MCF 10A (cell line): ENCODE measurements at regions of chr2 and their contacts with region 1.

Region 1: GRCh38 chr2:165305391-165306096 is 66.3 kb downstream of the SCN2A start:
- DNase-seq: no peak
- H3K4me3 Mint-ChIP-seq: no peak overlapping the region
- H3K27ac Mint-ChIP-seq: no peak overlapping the region
- H3K4me1 Mint-ChIP-seq: no peaks in the 10 kb centered on the region
- H3K27me3 Mint-ChIP-seq: peaks cover 33% of the 10 kb centered on the region
- CTCF ChIP-seq: no peak

Region 2: DNA sequence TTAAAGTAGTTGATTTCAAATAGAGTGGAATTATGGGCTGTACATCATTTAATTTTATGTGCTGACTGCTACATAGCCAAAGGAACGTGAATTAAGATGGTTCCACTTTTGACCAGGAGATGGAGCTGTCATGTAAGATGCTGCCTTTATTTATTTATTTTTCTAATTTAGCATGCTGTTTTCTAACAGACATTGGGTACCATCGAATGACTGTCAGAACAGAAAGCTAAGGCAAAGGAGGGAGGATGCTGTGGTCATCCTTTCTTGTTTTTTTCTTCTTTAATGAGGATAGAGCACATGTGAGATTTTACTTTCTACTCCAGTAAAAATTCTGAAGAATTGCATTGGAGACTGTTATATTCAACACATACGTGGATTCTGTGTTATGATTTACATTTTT is 66.3 kb before region 1 on chr2 and contains the start of gene SCN2A:
- CTCF ChIA-PET with region 1: interaction called, 3 read pairs
- POLR2A ChIA-PET with region 1: no interaction called
- intact Hi-C with region 1: loop called (anchors 1 kb)
- DNase-seq: peak; percentile 60
- H3K4me3 Mint-ChIP-seq: no peak within 1 kb of the TSS
- H3K27ac Mint-ChIP-seq: no peak within 1 kb of the TSS
- H3K4me1 Mint-ChIP-seq: no peaks in the 10 kb centered on the region
- H3K27me3 Mint-ChIP-seq: peaks cover 43% of the 10 kb centered on the region
- CTCF ChIP-seq: peak; percentile 49
- total RNA-seq, gene SCN2A: not detected in 2 replicates

Region 3: GRCh38 chr2:165274698-165275097 is 30.8 kb before region 1 on chr2:
- CTCF ChIA-PET with region 1: no interaction called
- POLR2A ChIA-PET with region 1: no interaction called
- intact Hi-C with region 1: no loop called
- DNase-seq: peak; percentile 5
- H3K4me3 Mint-ChIP-seq: no peak overlapping the region
- H3K27ac Mint-ChIP-seq: no peak overlapping the region
- H3K4me1 Mint-ChIP-seq: no peaks in the 10 kb centered on the region
- H3K27me3 Mint-ChIP-seq: peaks cover 49% of the 10 kb centered on the region
- CTCF ChIP-seq: no peak